Keratinocyte (primary cell): ENCODE measurements at regions of chr10 and their contacts with region 1.

Region 1: DNA sequence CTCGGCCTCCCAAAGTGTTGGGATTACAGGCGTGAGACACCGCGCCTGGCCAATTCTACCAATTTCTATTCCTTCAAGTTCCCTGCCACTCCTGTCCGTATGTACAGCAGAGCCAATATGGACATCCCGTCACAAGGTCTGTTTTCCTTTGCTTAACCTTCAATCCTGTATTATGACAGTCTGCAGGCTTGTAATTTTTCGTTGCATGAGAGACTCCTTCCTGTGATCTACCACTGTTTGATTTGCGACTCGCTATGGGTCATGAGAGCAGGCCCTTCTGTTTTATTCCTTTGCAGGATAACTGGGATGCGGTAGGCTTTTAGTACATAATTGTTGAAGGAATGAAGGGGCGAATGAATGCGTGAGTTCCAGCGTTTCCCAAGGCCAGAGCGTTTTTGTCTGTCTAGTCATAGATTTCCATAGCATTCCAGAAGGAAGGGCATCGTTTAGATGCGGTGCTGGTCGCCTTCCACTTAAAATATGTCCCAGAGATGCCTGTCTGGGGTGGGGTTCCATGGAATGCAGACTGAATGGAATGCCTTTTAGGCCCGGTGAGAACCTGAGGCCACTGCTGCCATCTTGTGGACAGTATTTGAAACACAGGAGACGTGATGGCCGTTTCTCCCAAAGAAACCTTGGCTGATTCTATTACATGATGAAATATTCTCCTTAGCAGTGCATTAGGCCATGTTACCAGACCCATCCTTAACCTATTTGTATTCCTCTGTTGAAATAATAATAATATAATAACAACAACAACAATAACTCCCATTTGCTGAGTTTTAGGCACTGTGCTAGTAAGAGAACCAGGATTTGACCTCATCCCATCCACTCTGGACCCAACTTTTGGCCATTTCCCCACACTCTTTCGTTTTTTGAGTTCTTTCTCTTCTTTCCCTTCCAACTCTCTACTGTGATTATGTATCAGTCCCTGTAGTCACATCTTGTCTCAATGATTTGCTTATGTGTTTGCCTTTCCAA is 193.2 kb downstream of the MYOF start:
- DNase-seq: peak; percentile 30
- H3K4me3 ChIP-seq: no peak overlapping the region
- H3K27ac ChIP-seq: no peak overlapping the region
- H3K4me1 ChIP-seq: peaks cover 6% of the 10 kb centered on the region
- H3K27me3 ChIP-seq: no peaks in the 10 kb centered on the region
- CTCF ChIP-seq: peak; percentile 75 to 93 (median 82)

Region 2: DNA sequence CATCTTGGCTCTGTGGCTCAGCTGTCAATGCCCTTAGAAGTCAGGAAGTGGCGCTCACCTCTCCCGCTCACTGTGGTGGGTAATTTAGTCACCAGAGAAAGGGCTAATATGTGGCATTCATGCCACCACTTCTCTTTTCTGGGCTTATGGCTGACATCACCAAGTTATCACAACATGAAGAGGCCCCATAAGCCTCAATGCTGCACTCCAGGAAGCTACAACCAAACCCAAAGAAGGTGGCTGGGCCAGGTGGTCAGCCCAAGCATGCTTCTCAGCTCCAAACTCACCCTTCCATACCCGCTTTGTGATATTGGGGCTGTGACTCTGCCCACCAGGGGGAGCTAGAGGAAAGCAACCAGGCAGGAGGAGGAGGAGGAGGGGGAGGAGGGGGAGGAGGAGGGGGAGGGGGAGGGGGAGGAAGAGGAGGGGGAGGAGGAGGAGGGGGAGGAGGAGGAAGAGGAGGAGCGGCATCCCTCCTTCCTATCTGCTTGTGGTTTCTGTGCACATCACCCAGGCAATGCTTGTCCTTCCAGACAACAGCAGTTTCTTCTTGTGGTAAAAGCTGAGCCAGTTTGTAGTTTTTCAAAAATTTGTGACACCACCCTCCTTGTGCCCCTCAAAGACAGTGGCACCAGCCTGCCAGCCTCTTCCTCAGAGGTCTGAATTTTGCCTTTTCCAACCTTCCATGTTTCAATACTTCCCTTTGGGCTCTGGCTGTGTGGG is 173.1 kb before region 1 on chr10:
- dilution Hi-C with region 1: loop called (anchors 25 kb)
- DNase-seq: peak; percentile 4
- H3K4me3 ChIP-seq: no peak overlapping the region
- H3K27ac ChIP-seq: no peak overlapping the region
- H3K4me1 ChIP-seq: no peaks in the 10 kb centered on the region
- H3K27me3 ChIP-seq: peaks cover 8% of the 10 kb centered on the region
- CTCF ChIP-seq: peak; percentile 40 to 70 (median 51)

Region 3: DNA sequence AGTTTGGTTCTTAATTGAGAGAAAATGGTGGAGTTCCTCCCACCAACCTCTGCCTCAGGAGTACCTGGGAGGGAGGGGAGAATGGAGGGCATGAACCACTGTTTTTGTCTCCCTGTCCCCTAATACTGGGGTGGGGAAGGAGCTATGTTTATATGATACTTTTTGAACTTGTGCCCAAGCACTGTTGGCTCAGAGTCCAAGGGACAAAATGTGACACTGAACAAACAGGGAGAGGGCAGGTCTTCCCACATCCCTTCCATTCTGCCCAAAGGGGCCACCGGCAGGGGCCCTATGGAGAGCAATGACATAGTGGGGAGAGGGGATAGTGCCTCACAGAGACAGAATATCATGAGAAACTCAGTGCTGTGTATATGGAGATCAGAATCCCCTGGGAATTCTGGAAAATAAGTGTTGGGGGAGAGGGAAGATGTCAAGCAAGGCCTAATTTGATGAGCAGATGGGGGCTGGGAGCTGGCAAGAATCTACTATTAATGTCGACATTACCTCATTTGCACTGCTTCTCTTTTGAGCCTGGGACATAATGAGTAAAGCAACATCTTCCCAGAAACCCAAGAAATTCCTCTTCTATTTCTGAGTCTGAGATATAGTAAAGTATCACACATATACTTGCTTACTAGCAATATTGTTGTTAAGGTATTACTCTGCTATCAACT is 34.6 kb before region 1 on chr10:
- dilution Hi-C with region 1: no loop called
- DNase-seq: no peak
- H3K4me3 ChIP-seq: no peak overlapping the region
- H3K27ac ChIP-seq: no peak overlapping the region
- H3K4me1 ChIP-seq: no peaks in the 10 kb centered on the region
- H3K27me3 ChIP-seq: no peaks in the 10 kb centered on the region
- CTCF ChIP-seq: no peak

Region 4: GRCh38 chr10:93352638-93353383 is 63.9 kb after region 1 on chr10:
- dilution Hi-C with region 1: no loop called
- DNase-seq: no peak
- H3K4me3 ChIP-seq: no peak overlapping the region
- H3K27ac ChIP-seq: no peak overlapping the region
- H3K4me1 ChIP-seq: no peaks in the 10 kb centered on the region
- H3K27me3 ChIP-seq: no peaks in the 10 kb centered on the region
- CTCF ChIP-seq: peak in 1 of 3 experiments; percentile 46